Heart left ventricle (tissue), 16 donors: ENCODE measurements at regions of chr2 and their contacts with region 1.

Region 1: GRCh38 chr2:198296665-198297308 is 492.4 kb downstream of the PLCL1 start:
- DNase-seq: peak in 4 of 5 donors; percentile 25 to 41 (median 38)
- ATAC-seq: peak; percentile 64 to 82 (median 76)
- H3K4me3 ChIP-seq: no peak overlapping the region
- H3K27ac ChIP-seq: no peak overlapping the region
- H3K4me1 ChIP-seq: peaks cover 0 to 5% (median 0%) of the 10 kb centered on the region in 12 donors
- H3K27me3 ChIP-seq: no peaks in the 10 kb centered on the region
- CTCF ChIP-seq: peak; percentile 72 to 91 (median 82)
- POLR2A ChIP-seq: no peak

Region 2: DNA sequence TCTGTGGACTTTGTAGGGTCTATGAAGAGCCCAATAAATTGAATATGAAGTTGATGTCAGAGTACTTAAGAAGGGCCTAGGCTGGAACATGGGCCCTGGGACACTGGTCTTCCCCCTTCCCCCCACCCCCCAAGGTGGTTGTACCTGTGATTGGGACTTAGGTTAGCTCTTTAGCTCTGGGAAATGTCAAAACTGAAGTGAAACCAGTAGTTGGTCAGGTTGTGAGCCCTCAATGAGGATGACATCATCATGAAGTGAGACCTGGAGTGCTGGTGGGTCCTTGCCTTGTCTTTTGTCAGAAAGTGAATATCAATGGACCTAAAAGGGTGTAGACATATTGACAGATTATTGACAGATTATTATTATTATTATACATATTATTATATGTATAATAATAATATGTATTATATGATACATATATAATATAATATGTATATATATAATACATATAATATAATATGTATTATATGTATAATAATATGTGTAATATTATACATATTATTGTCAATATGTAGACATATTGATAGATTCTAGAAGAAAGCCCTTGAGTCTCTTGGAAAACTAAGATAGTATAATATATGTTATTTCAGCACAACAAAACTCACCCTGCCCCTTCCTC is 586.3 kb before region 1 on chr2:
- intact Hi-C with region 1: loop called in 9 of 10 experiments (anchors 2 to 10 kb)
- DNase-seq: no peak
- ATAC-seq: no peak
- H3K4me3 ChIP-seq: no peak overlapping the region
- H3K27ac ChIP-seq: no peak overlapping the region
- H3K4me1 ChIP-seq: peaks cover 0 to 41% (median 23%) of the 10 kb centered on the region in 12 donors
- H3K27me3 ChIP-seq: no peaks in the 10 kb centered on the region
- CTCF ChIP-seq: no peak
- POLR2A ChIP-seq: no peak

Region 3: GRCh38 chr2:198135481-198135934 is 161.3 kb before region 1 on chr2:
- intact Hi-C with region 1: loop called in 3 of 10 experiments (anchors 5 to 10 kb)
- DNase-seq: no peak
- ATAC-seq: no peak
- H3K4me3 ChIP-seq: no peak overlapping the region
- H3K27ac ChIP-seq: no peak overlapping the region
- H3K4me1 ChIP-seq: peaks cover 0 to 20% (median 3%) of the 10 kb centered on the region in 12 donors
- H3K27me3 ChIP-seq: no peaks in the 10 kb centered on the region
- CTCF ChIP-seq: no peak
- POLR2A ChIP-seq: no peak